Activated CD4-positive, alpha-beta T cell treated with anti-CD3 and anti-CD28 coated beads, Interleukin-2, amount 10 ng/mL, durations not matched to agents 24 days and 14 days (primary cell): ENCODE measurements at regions of chr19 and their contacts with region 1.

Region 1: GRCh38 chr19:2887391-2887914 is 13.3 kb upstream of the ZNF57 start:
- DNase-seq: peak; percentile 57
- H3K4me3 Mint-ChIP-seq: no peak overlapping the region
- H3K27ac Mint-ChIP-seq: no peak overlapping the region
- H3K4me1 Mint-ChIP-seq: no peaks in the 10 kb centered on the region
- H3K27me3 Mint-ChIP-seq: no peaks in the 10 kb centered on the region

Region 2: GRCh38 chr19:2775556-2776430 is 111.7 kb before region 1 on chr19:
- intact Hi-C with region 1: no loop called
- DNase-seq: peak; percentile 93
- H3K4me3 Mint-ChIP-seq: peak overlapping the region; percentile 84
- H3K27ac Mint-ChIP-seq: peak overlapping the region; percentile 94
- H3K4me1 Mint-ChIP-seq: peaks cover 34% of the 10 kb centered on the region
- H3K27me3 Mint-ChIP-seq: no peaks in the 10 kb centered on the region

Region 3: DNA sequence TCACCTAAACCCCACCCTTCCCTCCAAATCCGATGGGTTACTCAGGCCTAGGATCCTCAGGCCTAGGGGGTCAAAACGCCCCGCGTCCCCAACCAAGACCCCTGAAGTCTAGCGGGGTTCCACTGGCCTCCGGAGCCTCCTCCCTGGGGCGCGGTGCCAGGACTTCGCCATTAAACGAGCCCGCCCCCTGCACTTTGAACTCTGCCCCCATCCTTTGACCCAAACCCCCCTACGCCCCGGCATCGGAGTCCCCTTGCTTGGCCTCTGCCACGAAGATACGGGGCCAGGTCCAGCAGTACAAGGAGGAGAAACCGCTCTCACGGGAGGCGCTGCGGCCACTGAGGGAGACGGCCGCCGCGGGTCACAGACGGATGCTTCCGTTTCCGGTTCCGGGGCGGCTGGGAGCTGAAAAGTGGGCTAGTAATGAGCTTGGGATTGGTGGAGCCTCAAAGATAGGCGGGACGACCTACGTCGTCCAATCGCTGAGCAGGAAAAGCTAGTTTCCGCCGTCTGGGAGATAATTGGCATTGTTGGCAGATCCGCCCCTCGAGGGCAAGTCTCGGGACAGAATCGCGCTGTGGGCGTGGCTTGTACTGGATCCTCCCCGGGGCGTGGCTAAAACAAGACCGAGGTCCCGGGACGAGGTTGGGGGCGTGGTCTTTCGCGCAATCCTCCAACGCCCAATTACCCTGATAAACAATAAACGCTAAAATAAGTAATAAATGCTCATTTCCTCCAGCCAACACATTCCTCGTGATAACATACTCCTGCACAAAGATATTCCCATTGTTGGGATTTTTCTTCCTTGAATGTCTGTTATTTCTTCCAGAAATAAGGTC is 63.1 kb after region 1 on chr19:
- intact Hi-C with region 1: loop called (anchors 1 kb)
- DNase-seq: peak; percentile 100
- H3K4me3 Mint-ChIP-seq: peak overlapping the region; percentile 96
- H3K27ac Mint-ChIP-seq: peak overlapping the region; percentile 95
- H3K4me1 Mint-ChIP-seq: peaks cover 12% of the 10 kb centered on the region
- H3K27me3 Mint-ChIP-seq: no peaks in the 10 kb centered on the region